RWPE1 (cell line): ENCODE measurements at regions of chr10 and their contacts with region 1.

Region 1: GRCh38 chr10:97676770-97677581 is 10.1 kb downstream of the AVPI1 start:
- DNase-seq: peak; percentile 90
- H3K27ac ChIP-seq: peak overlapping the region; percentile 65
- CTCF ChIP-seq: peak; percentile 76

Region 2: GRCh38 chr10:97640174-97640867 is 36.7 kb before region 1 on chr10 and contains the start of gene PI4K2A:
- CTCF ChIA-PET with region 1: no interaction called
- POLR2A ChIA-PET with region 1: no interaction called
- DNase-seq: peak; percentile 100
- H3K27ac ChIP-seq: peak within 1 kb of the TSS; percentile 86
- CTCF ChIP-seq: no peak

Region 3: GRCh38 chr10:97686962-97687784 is 10.2 kb after region 1 on chr10 and contains the start of gene AVPI1:
- CTCF ChIA-PET with region 1: interaction called, 18 read pairs
- POLR2A ChIA-PET with region 1: interaction called, 3 read pairs
- DNase-seq: peak; percentile 99
- H3K27ac ChIP-seq: peak within 1 kb of the TSS; percentile 96
- CTCF ChIP-seq: no peak

Region 4: DNA sequence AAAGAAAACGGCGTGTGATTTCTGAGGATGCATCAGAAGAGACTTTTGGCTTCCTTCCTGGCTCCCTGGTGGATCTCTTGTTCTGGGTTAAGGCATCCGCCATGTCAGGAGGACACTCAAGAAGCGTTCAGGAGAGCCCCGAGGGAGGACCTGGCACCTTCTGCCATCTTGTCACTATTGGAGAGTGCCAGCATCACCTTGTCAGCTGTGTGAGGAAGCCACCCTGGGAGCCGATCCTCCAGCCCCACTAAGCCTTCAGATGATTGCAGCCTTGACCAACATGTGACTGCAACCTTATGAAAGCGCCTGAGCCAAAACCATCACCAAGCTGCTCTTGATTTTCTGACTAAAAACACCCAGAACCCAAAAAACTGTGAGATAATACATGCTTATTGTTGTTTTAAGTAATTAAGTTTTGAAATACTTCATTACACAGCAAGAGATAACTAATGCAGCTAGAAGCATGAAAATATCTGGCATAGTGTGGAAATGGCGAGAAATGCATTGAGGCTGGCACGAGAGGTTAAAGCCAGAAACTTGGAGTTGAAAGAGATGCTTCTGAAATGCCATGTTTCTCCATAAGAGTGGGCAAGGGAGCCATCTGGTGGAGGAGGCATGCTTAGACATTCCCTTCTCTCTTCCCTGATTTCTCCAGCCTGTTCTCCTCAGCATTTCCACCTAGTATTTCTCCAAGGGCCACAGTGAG is 54.5 kb after region 1 on chr10:
- CTCF ChIA-PET with region 1: interaction called, 14 read pairs
- POLR2A ChIA-PET with region 1: no interaction called
- DNase-seq: peak; percentile 73
- H3K27ac ChIP-seq: peak overlapping the region; percentile 45
- CTCF ChIP-seq: peak; percentile 86